ENCODE measurements at regions of chr6 and their contacts with region 1.

Region 1: GRCh38 chr6:25962149-25963127 is at the start of gene TRIM38:
- DNase-seq: peak; percentile 59

Region 2: DNA sequence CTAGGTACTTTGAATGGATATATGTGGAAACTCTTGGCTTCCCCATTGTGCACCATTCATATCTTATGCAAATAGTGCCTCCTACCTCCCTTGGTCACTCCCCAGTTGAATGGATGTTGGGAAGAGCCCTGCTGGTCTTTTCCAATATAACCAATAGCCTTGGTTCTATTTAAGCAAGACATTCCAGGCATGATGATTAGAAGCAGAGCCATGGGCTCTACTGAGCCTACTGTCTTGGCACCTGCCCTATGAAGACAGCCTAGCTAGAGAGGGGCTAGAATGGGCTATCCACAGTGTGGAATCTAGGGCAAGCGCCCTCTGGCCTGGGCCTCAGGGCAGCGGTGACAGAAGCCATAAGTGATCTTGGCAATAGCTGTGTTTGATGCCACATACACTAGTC is 146.2 kb before region 1 on chr6:
- CTCF ChIA-PET with region 1: no interaction called
- POLR2A ChIA-PET with region 1: no interaction called
- DNase-seq: no peak

Region 3: DNA sequence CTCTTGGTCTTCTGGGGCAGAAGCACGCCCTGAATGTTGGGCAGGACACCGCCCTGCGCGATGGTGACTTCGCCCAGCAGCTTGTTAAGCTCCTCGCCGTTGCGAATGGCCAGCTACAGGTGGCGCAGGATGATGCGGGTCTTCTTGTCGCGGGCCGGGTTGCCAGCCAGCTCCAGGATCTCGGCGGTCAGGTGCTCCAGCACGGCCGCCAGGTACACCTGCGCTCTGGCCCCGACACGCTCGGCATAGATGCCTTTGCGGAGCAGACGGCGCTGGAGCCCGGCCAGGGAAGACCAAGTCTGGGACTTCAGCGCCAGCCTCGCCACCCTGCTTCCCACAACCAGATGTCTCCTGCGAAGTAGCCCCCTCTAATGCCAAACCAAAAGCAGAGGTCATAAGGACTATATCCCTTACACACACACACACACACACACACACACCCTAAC is 80.4 kb before region 1 on chr6:
- CTCF ChIA-PET with region 1: no interaction called
- POLR2A ChIA-PET with region 1: no interaction called
- DNase-seq: no peak

Region 4: DNA sequence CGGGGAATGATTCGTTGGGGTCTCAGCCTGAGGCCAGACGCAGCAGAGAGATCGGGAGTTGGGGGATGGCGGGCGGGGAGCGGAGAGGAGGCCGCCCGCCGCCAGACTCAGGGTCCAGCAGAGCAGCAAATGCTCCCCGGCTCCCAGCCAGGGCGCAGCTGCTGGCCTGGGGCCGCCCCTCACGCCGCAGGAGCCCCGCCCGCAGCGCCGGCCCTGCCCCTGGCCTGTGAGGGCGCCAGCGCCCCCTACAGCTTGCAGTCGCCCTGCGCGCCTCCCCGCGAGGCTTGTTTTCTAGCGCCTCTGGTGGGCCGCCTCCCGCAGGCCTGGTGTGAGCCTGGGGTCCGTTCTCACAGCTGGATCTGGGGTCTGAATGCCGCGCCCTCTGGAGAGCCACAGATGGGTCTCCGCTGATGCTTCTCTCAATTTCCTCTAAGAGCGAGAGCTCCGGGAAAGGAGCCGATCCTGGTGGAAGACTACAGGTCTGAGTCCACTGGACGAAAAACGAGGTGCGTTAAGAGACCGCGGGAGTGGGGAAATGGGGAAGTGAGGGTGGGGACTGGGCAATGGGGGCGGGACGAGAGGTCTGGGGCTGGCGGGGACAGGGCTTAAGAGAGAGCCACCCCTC is 30.1 kb after region 1 on chr6:
- CTCF ChIA-PET with region 1: no interaction called
- POLR2A ChIA-PET with region 1: interaction called, 12 read pairs
- DNase-seq: peak; percentile 88

Measured in HEK293T (cell line).